Endothelial cell of umbilical vein (primary cell): ENCODE measurements at regions of chr2 and their contacts with region 1.

Region 1: DNA sequence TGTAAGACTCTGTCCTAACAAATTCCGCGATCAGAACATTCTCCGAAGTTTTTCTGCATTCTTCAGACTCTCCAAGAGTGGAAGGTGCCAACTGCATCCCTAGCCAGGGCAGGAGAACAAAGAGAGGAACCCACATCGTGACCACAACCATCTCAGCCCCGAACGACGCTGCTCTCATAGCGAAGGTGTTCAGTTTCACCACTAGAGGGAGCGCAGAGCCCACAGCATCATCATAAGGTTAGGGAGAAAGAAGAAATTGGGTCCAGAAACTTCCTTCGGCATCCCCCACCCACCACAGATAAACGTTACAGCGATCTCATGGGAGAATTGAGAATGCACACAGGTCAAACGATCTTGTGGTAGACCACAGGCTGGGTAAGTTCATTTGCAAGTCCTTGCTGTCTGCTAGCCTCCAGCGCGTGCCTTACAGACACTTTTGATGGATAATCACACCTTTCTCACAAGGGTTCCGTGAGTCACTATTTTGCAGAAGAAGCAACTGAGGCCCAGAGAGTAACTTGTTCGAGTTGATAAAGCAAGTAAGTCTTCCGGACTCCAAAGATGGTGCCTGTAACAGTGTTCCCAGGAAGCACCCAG is 53.7 kb upstream of the ARL4C start:
- DNase-seq: peak; percentile 76
- H3K4me3 ChIP-seq: no peak overlapping the region
- H3K27ac ChIP-seq: no peak overlapping the region
- H3K4me1 ChIP-seq: no peaks in the 10 kb centered on the region
- H3K27me3 ChIP-seq: peaks cover 0 to 6% of the 10 kb centered on the region in 2 experiments
- CTCF ChIP-seq: peak; percentile 84 to 87
- POLR2A ChIP-seq: no peak

Region 2: GRCh38 chr2:234102112-234102511 is 448.5 kb before region 1 on chr2:
- CTCF ChIA-PET with region 1: no interaction called
- POLR2A ChIA-PET with region 1: no interaction called
- dilution Hi-C with region 1: no loop called
- intact Hi-C with region 1: no loop called
- DNase-seq: no peak
- H3K4me3 ChIP-seq: no peak overlapping the region
- H3K27ac ChIP-seq: no peak overlapping the region
- H3K4me1 ChIP-seq: no peaks in the 10 kb centered on the region
- H3K27me3 ChIP-seq: peaks cover 0 to 2% of the 10 kb centered on the region in 2 experiments
- CTCF ChIP-seq: no peak
- POLR2A ChIP-seq: no peak

Region 3: GRCh38 chr2:234620018-234620417 is 69.4 kb after region 1 on chr2:
- CTCF ChIA-PET with region 1: interaction called, 3 read pairs
- POLR2A ChIA-PET with region 1: no interaction called
- dilution Hi-C with region 1: no loop called
- intact Hi-C with region 1: loop called (anchors 2 kb)
- DNase-seq: peak; percentile 84
- H3K4me3 ChIP-seq: no peak overlapping the region
- H3K27ac ChIP-seq: no peak overlapping the region
- H3K4me1 ChIP-seq: peaks cover 20% of the 10 kb centered on the region
- H3K27me3 ChIP-seq: peaks cover 34 to 41% of the 10 kb centered on the region in 2 experiments
- CTCF ChIP-seq: no peak
- POLR2A ChIP-seq: peak; percentile 73

Region 4: DNA sequence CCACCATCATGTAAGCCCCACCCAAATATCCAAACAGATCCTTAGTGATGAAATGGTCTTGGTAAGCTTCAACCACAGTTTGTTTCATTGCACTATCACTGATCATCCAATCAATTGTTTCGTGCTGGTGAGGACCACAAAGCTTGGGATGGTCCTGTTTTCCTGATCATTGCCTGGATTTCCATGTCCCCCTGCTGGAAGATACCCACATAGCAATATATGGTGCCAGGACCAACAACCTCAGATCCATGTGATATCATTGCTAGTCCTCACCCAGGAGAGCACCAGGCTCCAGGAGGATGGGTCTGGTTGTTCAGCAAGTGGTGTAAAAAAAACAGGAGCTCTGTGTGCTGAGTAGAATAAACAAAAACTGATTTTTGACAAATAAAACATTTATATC is 194.7 kb after region 1 on chr2:
- CTCF ChIA-PET with region 1: no interaction called
- POLR2A ChIA-PET with region 1: no interaction called
- dilution Hi-C with region 1: no loop called
- intact Hi-C with region 1: loop called (anchors 10 kb)
- DNase-seq: no peak
- H3K4me3 ChIP-seq: no peak overlapping the region
- H3K27ac ChIP-seq: no peak overlapping the region
- H3K4me1 ChIP-seq: no peaks in the 10 kb centered on the region
- H3K27me3 ChIP-seq: peaks cover 0 to 8% of the 10 kb centered on the region in 2 experiments
- CTCF ChIP-seq: peak; percentile 8 to 13
- POLR2A ChIP-seq: no peak

Region 5: DNA sequence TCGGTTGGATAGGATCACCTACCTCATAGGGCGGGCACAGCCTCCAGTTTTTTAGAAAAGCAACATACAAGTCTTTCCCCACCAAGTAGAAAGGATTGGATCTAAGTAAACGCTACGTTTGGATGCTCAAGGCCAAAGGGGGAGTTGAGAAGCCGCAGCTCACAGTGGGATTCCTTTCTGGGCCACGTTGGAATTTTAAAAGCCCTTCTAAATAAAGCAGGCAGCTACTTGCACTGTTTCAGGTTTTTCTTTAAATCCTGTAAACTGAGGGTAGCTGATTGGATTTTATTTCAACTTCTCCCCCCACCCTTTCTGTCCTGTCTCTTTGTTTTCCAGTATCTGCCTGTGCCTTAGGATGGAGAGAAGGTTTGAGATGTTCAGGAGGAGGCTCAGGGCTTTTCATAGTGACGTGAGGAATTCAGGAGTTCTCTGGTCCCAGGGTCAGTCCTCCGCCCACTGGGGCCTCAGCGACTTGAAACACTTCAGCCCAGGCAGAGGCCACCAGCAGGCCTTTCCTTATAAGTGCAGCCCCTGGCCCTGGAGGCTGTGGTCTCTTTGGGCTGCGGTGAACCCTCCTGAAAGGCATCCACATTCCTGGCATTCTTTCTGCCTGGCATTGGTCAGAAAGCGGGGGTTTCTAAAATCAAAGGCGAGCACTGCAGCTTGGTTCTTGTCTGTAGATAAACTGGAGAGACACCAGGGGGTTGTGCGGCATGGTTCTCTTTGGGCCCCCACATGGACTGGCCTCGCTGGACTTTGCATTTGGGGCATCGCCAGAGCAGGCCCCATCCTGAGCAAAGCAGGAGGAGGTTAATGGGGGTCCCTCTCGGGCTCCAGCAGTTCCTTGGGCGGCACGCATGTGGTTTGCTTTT is 445.7 kb after region 1 on chr2:
- CTCF ChIA-PET with region 1: no interaction called
- POLR2A ChIA-PET with region 1: no interaction called
- dilution Hi-C with region 1: no loop called
- intact Hi-C with region 1: loop called (anchors 1 kb)
- DNase-seq: peak; percentile 64
- H3K4me3 ChIP-seq: no peak overlapping the region
- H3K27ac ChIP-seq: peak overlapping the region; percentile 88
- H3K4me1 ChIP-seq: peaks cover 56% of the 10 kb centered on the region
- H3K27me3 ChIP-seq: no peaks in the 10 kb centered on the region
- CTCF ChIP-seq: peak; percentile 41 to 53
- POLR2A ChIP-seq: no peak

Region 6: DNA sequence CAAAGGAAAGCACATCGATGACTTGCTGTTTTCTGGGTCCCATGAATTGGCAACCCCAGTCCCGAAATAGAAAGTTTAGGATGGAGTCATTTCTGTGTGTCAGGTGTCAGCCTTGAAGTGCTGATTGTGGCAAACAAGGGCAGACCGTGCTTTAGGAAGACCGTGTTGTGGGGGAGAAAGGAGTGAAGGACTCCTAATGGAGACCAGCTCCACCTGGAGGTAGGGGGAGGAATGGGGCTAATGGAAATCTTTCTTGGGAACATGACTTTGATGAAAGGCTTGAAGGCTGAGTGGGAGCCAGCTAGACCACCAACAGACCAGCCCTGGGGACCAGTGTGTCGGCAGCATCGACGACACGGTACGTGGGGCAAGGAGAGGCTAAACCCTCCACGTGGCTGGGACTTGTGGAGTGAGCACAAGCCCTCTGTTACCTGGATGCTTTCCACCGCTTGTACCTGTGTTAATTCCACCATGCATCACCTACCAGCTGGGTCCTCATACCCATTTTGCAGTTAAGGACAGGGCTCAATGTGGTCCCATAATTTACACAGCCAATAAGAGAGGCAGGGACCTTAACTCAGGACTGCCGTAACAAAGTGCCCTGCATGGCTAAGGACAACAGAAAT is 505.4 kb after region 1 on chr2:
- CTCF ChIA-PET with region 1: interaction called, 7 read pairs
- POLR2A ChIA-PET with region 1: no interaction called
- dilution Hi-C with region 1: no loop called
- intact Hi-C with region 1: loop called (anchors 1 kb)
- DNase-seq: peak; percentile 44
- H3K4me3 ChIP-seq: no peak overlapping the region
- H3K27ac ChIP-seq: no peak overlapping the region
- H3K4me1 ChIP-seq: peaks cover 21% of the 10 kb centered on the region
- H3K27me3 ChIP-seq: no peaks in the 10 kb centered on the region
- CTCF ChIP-seq: peak; percentile 38 to 50
- POLR2A ChIP-seq: no peak